ENCODE measurements at regions of chr11 and their contacts with region 1.

Region 1: DNA sequence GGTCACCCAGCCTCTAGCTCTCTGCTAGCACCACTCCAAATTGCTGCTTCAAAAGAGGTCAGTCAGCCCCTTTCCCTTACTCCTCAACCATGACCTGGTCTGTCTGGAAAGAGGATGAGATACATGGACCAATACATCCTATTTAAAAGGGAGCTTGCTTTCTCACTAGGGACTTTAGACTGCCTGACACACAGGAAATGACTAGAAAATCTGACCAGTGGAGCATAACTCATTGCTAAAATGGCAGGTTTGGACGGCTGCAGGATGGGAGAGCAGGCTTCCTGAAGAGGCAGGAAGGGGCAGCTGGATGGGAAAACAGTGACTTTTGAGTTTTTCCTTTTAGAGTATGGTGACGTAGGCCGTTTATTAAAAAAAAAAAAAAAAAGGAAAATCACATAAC is 25.3 kb downstream of the STIM1 start:
- DNase-seq: no peak
- H3K4me3 ChIP-seq: no peak overlapping the region
- H3K4me3 Mint-ChIP-seq: no peak overlapping the region
- H3K27ac Mint-ChIP-seq: peak overlapping the region; percentile 90
- H3K4me1 ChIP-seq: peaks cover 53% of the 10 kb centered on the region
- H3K4me1 Mint-ChIP-seq: peaks cover 40% of the 10 kb centered on the region
- H3K27me3 ChIP-seq: no peaks in the 10 kb centered on the region
- H3K27me3 Mint-ChIP-seq: no peaks in the 10 kb centered on the region
- CTCF ChIP-seq: no peak

Region 2: GRCh38 chr11:3905080-3905953 is 24.6 kb after region 1 on chr11:
- CTCF ChIA-PET with region 1: no interaction called
- POLR2A ChIA-PET with region 1: no interaction called
- intact Hi-C with region 1: loop called (anchors 1 kb)
- DNase-seq: peak; percentile 78 to 81
- H3K4me3 ChIP-seq: no peak overlapping the region
- H3K4me3 Mint-ChIP-seq: peak overlapping the region; percentile 60
- H3K27ac Mint-ChIP-seq: peak overlapping the region; percentile 96
- H3K4me1 ChIP-seq: peaks cover 43% of the 10 kb centered on the region
- H3K4me1 Mint-ChIP-seq: peaks cover 34% of the 10 kb centered on the region
- H3K27me3 ChIP-seq: no peaks in the 10 kb centered on the region
- H3K27me3 Mint-ChIP-seq: no peaks in the 10 kb centered on the region
- CTCF ChIP-seq: no peak